Right ventricle myocardium inferior (tissue), 1 donor: ENCODE measurements at regions of chr1 and their contacts with region 1.

Region 1: GRCh38 chr1:231603598-231604275 is 22.9 kb upstream of the DISC1 start:
- DNase-seq: no peak
- ATAC-seq: peak; percentile 39

Region 2: DNA sequence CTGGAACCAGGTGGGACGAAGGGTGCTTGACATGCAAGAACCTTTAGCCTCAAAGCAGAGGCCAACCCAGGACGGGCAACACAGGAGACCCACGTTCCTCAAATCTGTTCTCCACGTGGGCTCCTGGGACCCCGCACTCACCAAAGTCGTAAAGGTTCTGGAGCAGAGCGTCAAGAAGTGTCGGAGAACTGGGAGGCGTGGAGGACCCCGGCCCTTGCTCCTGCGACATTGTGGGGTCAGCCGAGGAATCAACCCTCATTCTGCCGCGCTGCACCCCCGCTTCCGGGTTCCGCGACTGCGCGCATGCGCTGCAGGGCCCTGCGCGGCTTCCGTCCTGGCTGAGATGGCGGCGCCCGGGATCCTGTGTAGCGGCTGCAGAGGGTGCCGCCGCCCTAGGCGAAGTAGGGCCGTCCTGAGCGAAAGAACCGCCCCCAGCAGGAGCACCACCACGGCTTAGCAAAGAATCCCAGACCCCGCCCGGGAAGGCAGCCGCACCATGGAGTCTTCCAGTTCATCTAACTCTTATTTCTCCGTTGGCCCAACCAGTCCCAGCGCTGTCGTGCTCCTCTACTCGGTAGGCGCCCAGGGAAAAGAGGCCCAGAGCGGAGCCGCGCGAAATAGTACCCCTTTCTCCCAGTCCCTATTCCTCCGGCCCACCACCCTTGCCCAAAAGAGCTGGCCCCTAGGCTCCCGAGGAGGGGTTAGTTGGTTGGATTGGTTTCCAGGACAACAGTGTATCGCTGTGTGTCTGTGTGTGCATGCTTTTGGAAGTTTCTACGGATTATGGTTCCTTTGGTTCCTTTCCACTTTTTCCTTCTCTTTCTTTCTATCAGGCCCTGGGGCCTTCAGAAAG is 362.6 kb before region 1 on chr1 and contains the start of gene GNPAT:
- intact Hi-C with region 1: loop called (anchors 10 kb)
- DNase-seq: peak; percentile 96
- ATAC-seq: peak; percentile 98
- total RNA-seq, gene GNPAT: 59.1 TPM